T-cell (primary cell): ENCODE measurements at regions of chr3 and their contacts with region 1.

Region 1: DNA sequence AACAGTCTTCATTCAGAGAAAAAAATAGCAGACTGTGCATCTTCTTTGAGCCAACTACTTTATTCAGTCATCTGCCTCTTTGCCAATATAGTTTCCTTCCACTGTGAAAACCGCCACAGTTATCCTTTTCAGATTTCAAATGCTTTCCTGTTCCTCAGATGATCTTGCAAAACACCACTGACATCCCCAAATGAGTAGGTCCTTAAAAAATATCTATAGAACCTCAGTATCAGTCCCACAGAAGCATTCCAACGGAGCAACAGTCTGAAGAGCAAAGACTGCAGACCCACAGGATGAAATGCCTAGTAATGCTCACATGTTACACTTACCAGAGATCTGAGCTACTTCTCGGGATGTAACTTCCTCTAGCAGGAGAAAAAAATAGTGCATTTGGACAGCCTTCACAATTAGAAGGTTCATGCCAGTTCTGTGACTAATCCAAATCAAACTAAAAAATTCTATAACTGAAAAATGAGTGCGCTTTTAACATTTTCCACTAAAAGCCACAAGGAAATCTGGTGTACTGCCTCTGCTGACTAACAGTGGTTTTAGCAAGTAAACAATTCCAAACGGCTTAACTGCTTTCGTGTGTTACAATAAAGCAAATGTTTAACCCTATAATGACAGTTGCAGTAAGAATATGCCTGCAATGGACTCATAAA is at the start of gene ANKRD28:
- DNase-seq: peak in 2 of 35 experiments; percentile 11 to 54
- ATAC-seq: peak; percentile 55 to 69 (median 59)
- H3K4me3 ChIP-seq: peak within 1 kb of the TSS in 1 of 2 donors; percentile 34
- H3K4me3 Mint-ChIP-seq: peak within 1 kb of the TSS; percentile 57 to 83 (median 76)
- H3K27ac ChIP-seq: peak within 1 kb of the TSS; percentile 81
- H3K27ac Mint-ChIP-seq: peak within 1 kb of the TSS; percentile 87
- H3K4me1 ChIP-seq: peaks cover 15 to 44% of the 10 kb centered on the region in 2 experiments
- H3K4me1 Mint-ChIP-seq: peaks cover 75 to 86% (median 81%) of the 10 kb centered on the region in 3 donors
- H3K27me3 ChIP-seq: no peaks in the 10 kb centered on the region
- H3K27me3 Mint-ChIP-seq: no peaks in the 10 kb centered on the region
- total RNA-seq, gene ANKRD28: 30.1 to 67.6 (median 39.0) TPM

Region 2: GRCh38 chr3:15289661-15290060 is 508.1 kb before region 1 on chr3:
- CTCF ChIA-PET with region 1: no interaction called
- POLR2A ChIA-PET with region 1: interaction called in 1 of 2 experiments, 11 read pairs
- DNase-seq: no peak
- ATAC-seq: no peak
- H3K4me3 ChIP-seq: no peak overlapping the region
- H3K4me3 Mint-ChIP-seq: peak overlapping the region in 1 of 3 donors; percentile 77
- H3K27ac ChIP-seq: peak overlapping the region; percentile 58
- H3K27ac Mint-ChIP-seq: peak overlapping the region; percentile 90 to 96
- H3K4me1 ChIP-seq: peaks cover 26 to 85% of the 10 kb centered on the region in 2 experiments
- H3K4me1 Mint-ChIP-seq: peaks cover 82 to 94% (median 83%) of the 10 kb centered on the region in 3 donors
- H3K27me3 ChIP-seq: no peaks in the 10 kb centered on the region
- H3K27me3 Mint-ChIP-seq: no peaks in the 10 kb centered on the region

Region 3: DNA sequence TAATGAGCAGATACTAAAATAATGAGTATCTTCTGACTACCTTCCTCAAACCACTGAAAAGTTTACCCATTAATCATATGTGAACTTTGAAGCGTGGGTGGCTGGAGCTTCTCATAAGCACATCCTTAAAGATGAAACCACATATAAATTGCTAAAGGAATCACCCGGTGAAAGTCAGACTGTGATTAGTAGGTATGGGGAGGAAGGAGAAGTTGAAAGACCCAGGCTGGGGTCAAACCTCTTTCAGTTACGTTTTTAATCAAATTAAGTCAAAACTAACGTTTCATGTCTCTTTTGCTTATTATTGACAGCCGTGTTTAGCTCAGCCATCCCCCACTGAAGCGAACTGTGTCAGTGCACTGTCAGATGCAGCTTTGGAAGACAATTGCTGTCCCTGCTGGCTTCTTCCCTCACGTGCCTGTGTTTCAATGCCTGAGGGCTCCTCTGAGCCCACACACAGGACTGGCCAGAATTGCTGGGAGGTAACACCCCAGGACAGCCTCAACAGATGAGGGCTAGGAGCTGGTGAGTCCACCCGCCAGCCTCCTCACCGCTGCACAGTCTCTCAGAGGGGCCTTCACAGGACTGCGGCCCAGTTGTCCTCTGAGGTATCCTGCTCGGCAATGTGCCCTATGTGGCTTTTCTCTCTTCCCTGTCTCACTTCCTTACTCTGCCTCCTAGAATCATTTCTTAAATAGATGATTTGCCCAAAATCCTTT is 436.1 kb before region 1 on chr3:
- CTCF ChIA-PET with region 1: no interaction called
- POLR2A ChIA-PET with region 1: interaction called in 1 of 2 experiments, 13 read pairs
- DNase-seq: peak in 1 of 35 experiments; percentile 25
- ATAC-seq: peak; percentile 30 to 47 (median 46)
- H3K4me3 ChIP-seq: no peak overlapping the region
- H3K4me3 Mint-ChIP-seq: peak overlapping the region; percentile 21 to 59 (median 34)
- H3K27ac ChIP-seq: peak overlapping the region; percentile 26
- H3K27ac Mint-ChIP-seq: peak overlapping the region; percentile 84 to 88
- H3K4me1 ChIP-seq: peaks cover 10 to 23% of the 10 kb centered on the region in 2 experiments
- H3K4me1 Mint-ChIP-seq: peaks cover 38 to 50% (median 41%) of the 10 kb centered on the region in 3 donors
- H3K27me3 ChIP-seq: no peaks in the 10 kb centered on the region
- H3K27me3 Mint-ChIP-seq: no peaks in the 10 kb centered on the region

Region 4: DNA sequence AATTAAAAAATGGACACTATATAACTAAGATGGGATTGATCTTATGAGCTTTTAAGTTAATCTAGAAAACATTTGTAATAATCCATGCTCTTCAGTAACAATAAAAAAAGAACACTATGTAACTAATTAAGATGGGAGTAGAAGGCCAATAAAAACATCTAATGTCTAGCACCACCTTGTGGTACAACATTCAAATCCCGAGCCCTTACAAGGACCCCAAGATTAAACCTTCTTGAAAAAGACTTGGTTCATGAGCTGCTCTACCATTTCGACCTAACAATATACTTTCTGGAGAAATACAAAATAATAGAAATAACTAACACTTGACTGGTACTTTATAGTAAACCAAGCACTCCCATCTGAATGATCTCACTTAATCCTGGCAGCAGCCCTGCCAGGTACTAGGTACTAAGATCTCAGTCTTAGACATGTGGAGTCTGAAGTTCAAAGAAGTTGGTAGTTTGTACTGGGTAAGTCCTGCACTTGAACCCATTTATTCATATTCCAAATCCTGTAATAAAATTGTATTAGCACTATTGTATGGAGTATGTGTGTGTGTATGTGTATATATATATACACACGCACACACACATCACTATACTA is 392.2 kb before region 1 on chr3:
- CTCF ChIA-PET with region 1: no interaction called
- POLR2A ChIA-PET with region 1: no interaction called
- DNase-seq: peak in 7 of 35 experiments; percentile 12 to 76 (median 21)
- ATAC-seq: peak in 2 of 4 experiments; percentile 43 to 69
- H3K4me3 ChIP-seq: no peak overlapping the region
- H3K4me3 Mint-ChIP-seq: no peak overlapping the region
- H3K27ac ChIP-seq: no peak overlapping the region
- H3K27ac Mint-ChIP-seq: no peak overlapping the region
- H3K4me1 ChIP-seq: peaks cover 0 to 2% of the 10 kb centered on the region in 2 experiments
- H3K4me1 Mint-ChIP-seq: peaks cover 0 to 16% (median 7%) of the 10 kb centered on the region in 3 donors
- H3K27me3 ChIP-seq: no peaks in the 10 kb centered on the region
- H3K27me3 Mint-ChIP-seq: no peaks in the 10 kb centered on the region

Region 5: DNA sequence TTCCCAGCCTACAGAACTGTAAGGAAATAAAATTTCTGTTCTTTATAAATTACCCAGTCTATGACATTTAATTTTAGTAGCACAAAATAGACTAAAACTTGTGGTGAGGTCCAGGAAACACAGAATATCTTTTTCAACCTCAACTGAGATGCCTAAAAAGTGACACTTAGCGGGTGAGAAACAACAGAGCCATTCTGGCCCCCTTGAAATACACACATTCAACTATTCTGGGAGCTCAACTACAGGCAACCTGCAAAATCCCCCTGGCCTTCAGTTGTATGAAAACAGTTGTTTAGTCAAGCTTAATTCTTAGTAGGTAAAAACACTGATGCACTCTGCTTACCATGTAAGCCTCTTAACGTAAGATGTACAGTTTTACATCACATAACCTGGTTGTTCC is 66.7 kb before region 1 on chr3:
- CTCF ChIA-PET with region 1: no interaction called
- POLR2A ChIA-PET with region 1: interaction called in 1 of 2 experiments, 10 read pairs
- DNase-seq: peak in 1 of 35 experiments; percentile 2
- ATAC-seq: no peak
- H3K4me3 ChIP-seq: no peak overlapping the region
- H3K4me3 Mint-ChIP-seq: no peak overlapping the region
- H3K27ac ChIP-seq: no peak overlapping the region
- H3K27ac Mint-ChIP-seq: no peak overlapping the region
- H3K4me1 ChIP-seq: no peaks in the 10 kb centered on the region
- H3K4me1 Mint-ChIP-seq: peaks cover 2 to 5% (median 5%) of the 10 kb centered on the region in 3 donors
- H3K27me3 ChIP-seq: no peaks in the 10 kb centered on the region
- H3K27me3 Mint-ChIP-seq: no peaks in the 10 kb centered on the region

Region 6: GRCh38 chr3:15812183-15812582 is 14.4 kb after region 1 on chr3:
- CTCF ChIA-PET with region 1: interaction called, 5 to 25 read pairs
- POLR2A ChIA-PET with region 1: interaction called, 4 to 6 read pairs
- DNase-seq: peak in 1 of 35 experiments; percentile 57
- ATAC-seq: no peak
- H3K4me3 ChIP-seq: no peak overlapping the region
- H3K4me3 Mint-ChIP-seq: no peak overlapping the region
- H3K27ac ChIP-seq: no peak overlapping the region
- H3K27ac Mint-ChIP-seq: no peak overlapping the region
- H3K4me1 ChIP-seq: peaks cover 2 to 3% of the 10 kb centered on the region in 2 experiments
- H3K4me1 Mint-ChIP-seq: peaks cover 28 to 40% (median 29%) of the 10 kb centered on the region in 3 donors
- H3K27me3 ChIP-seq: no peaks in the 10 kb centered on the region
- H3K27me3 Mint-ChIP-seq: no peaks in the 10 kb centered on the region

Region 7: DNA sequence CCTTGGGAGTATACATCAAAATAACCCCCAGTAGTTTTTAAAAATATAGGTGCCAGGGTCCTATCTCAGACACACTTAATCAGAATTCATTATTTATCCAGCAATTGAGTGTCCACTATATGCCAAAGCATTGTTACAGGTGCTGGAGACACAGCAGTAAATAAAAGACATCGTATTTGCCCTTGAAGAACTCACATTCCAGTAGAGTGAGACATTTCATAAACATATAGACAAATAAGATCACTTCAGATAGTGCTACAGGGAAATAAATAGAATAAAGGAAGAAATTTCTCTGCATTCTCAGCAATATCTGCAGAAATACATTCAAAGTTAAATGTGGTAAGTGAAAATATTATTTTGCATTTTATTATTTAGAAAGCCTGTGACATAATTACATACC is 34.2 kb after region 1 on chr3:
- CTCF ChIA-PET with region 1: interaction called, 4 to 10 read pairs
- POLR2A ChIA-PET with region 1: no interaction called
- DNase-seq: no peak
- ATAC-seq: no peak
- H3K4me3 ChIP-seq: no peak overlapping the region
- H3K4me3 Mint-ChIP-seq: no peak overlapping the region
- H3K27ac ChIP-seq: no peak overlapping the region
- H3K27ac Mint-ChIP-seq: no peak overlapping the region
- H3K4me1 ChIP-seq: no peaks in the 10 kb centered on the region
- H3K4me1 Mint-ChIP-seq: peaks cover 29 to 56% (median 35%) of the 10 kb centered on the region in 3 donors
- H3K27me3 ChIP-seq: no peaks in the 10 kb centered on the region
- H3K27me3 Mint-ChIP-seq: no peaks in the 10 kb centered on the region

Region 8: GRCh38 chr3:16130066-16130465 is 332.3 kb after region 1 on chr3:
- CTCF ChIA-PET with region 1: no interaction called
- POLR2A ChIA-PET with region 1: no interaction called
- DNase-seq: no peak
- ATAC-seq: no peak
- H3K4me3 ChIP-seq: no peak overlapping the region
- H3K4me3 Mint-ChIP-seq: no peak overlapping the region
- H3K27ac ChIP-seq: no peak overlapping the region
- H3K27ac Mint-ChIP-seq: no peak overlapping the region
- H3K4me1 ChIP-seq: no peaks in the 10 kb centered on the region
- H3K4me1 Mint-ChIP-seq: no peaks in the 10 kb centered on the region
- H3K27me3 ChIP-seq: peaks cover 0 to 3% of the 10 kb centered on the region in 2 experiments
- H3K27me3 Mint-ChIP-seq: peaks cover 2 to 5% of the 10 kb centered on the region in 2 donors